Right ventricle myocardium inferior (tissue), 1 donor: ENCODE measurements at regions of chr3 and their contacts with region 1.

Region 1: DNA sequence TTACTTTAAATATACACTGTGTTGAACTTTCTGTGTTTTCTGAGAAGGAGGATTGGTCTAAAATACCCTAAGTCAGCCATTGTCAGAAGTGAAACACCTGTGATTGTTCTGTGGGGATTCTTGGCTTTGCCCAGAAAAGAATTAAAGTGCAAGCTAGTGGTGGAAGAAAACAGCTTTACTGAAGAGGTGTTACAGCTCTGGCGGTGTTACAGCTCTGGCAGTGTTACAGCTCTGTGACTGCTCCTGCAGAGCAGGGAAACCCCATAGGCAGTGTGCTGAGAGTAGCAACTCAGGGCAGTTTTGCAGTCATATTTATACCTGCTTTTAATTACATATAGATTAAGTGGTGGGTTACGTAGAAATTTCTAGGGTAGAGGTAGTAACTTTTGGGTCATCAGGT is 66.6 kb downstream of the C3orf20 start:
- DNase-seq: no peak
- ATAC-seq: no peak

Region 2: DNA sequence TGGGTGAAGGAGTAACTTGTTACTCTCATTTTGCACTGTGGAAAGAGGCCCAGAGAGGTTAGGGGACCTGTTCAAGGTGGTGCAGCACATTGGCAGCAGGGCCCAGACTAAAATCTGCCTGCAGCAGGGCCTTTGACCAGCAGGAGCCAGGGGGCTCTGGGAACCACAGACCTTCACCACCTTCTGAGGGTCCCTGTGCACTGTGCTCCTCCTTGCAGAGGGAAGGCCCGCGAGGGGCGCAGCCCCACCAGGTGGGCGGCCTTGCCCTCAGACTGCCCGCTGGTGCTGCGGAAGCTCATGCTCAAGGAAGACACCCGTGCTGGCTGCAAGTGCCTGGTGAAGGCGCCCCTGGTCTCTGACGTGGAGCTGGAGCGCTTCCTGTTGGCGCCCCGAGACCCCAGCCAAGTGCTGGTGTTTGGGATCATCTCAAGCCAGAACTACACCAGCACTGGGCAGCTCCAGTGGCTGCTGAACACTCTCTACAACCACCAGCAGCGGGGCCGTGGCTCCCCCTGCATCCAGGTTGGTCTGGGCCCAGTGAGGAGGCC is 15.7 kb after region 1 on chr3:
- intact Hi-C with region 1: loop called (anchors 1 kb)
- DNase-seq: no peak
- ATAC-seq: no peak